Activated T-helper 1 cell treated with anti-CD3 and anti-CD28 coated beads, Interleukin-12 subunit alpha, Interleukin-12 subunit beta, Interleukin-2, Interleukin-4 antibody, amounts not matched to agents 30 ng/mL and 10 ng/mL and 1 ng/mL, durations not matched to agents 14 hours and 24 hours and 36 hours (primary cell): ENCODE measurements at regions of chr6 and their contacts with region 1.

Region 1: DNA sequence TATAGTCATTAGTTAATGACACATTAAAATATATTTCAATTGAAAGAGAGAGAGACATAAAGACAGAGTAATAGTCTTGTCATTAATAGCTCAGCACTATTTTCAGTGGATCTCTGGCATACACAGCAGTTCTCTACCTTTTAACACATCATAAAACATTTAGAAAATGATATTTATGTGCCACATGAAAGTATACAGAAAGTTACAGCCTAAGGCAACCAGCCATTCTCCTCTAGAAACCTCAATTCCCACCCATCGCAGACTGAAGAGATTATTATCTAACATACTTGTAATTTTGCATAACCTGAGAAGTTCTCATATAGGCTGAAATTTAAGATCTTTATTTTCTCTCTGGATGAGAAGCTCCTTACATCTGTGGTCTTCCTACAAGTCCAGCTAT is 58.7 kb upstream of the FAM83B start:
- DNase-seq: no peak
- H3K4me3 Mint-ChIP-seq: no peak overlapping the region
- H3K27ac Mint-ChIP-seq: no peak overlapping the region
- H3K4me1 Mint-ChIP-seq: no peaks in the 10 kb centered on the region
- H3K27me3 Mint-ChIP-seq: no peaks in the 10 kb centered on the region

Region 2: GRCh38 chr6:54801669-54802068 is 13.8 kb after region 1 on chr6:
- intact Hi-C with region 1: no loop called
- DNase-seq: no peak
- H3K4me3 Mint-ChIP-seq: no peak overlapping the region
- H3K27ac Mint-ChIP-seq: no peak overlapping the region
- H3K4me1 Mint-ChIP-seq: no peaks in the 10 kb centered on the region
- H3K27me3 Mint-ChIP-seq: no peaks in the 10 kb centered on the region

Region 3: GRCh38 chr6:54980511-54981275 is 192.9 kb after region 1 on chr6:
- intact Hi-C with region 1: loop called (anchors 5 kb)
- DNase-seq: no peak
- H3K4me3 Mint-ChIP-seq: no peak overlapping the region
- H3K27ac Mint-ChIP-seq: no peak overlapping the region
- H3K4me1 Mint-ChIP-seq: no peaks in the 10 kb centered on the region
- H3K27me3 Mint-ChIP-seq: no peaks in the 10 kb centered on the region

Region 4: GRCh38 chr6:55040102-55040848 is 252.4 kb after region 1 on chr6:
- intact Hi-C with region 1: no loop called
- DNase-seq: no peak
- H3K4me3 Mint-ChIP-seq: no peak overlapping the region
- H3K27ac Mint-ChIP-seq: no peak overlapping the region
- H3K4me1 Mint-ChIP-seq: no peaks in the 10 kb centered on the region
- H3K27me3 Mint-ChIP-seq: no peaks in the 10 kb centered on the region

Region 5: GRCh38 chr6:55456016-55456415 is 668.2 kb after region 1 on chr6:
- intact Hi-C with region 1: no loop called
- DNase-seq: no peak
- H3K4me3 Mint-ChIP-seq: no peak overlapping the region
- H3K27ac Mint-ChIP-seq: no peak overlapping the region
- H3K4me1 Mint-ChIP-seq: no peaks in the 10 kb centered on the region
- H3K27me3 Mint-ChIP-seq: no peaks in the 10 kb centered on the region